Activated CD4-positive, alpha-beta T cell treated with anti-CD3 and anti-CD28 coated beads, Interleukin-2, amount 10 ng/mL, durations not matched to agents 24 days and 14 days (primary cell): ENCODE measurements at regions of chr12 and their contacts with region 1.

Region 1: GRCh38 chr12:7018350-7019042 is at the start of gene LPCAT3:
- DNase-seq: peak; percentile 100
- H3K4me3 Mint-ChIP-seq: peak within 1 kb of the TSS; percentile 90
- H3K27ac Mint-ChIP-seq: peak within 1 kb of the TSS; percentile 91
- H3K4me1 Mint-ChIP-seq: peaks cover 28% of the 10 kb centered on the region
- H3K27me3 Mint-ChIP-seq: no peaks in the 10 kb centered on the region
- total RNA-seq, gene LPCAT3: 29.2 and 29.5 TPM in 2 replicates

Region 2: GRCh38 chr12:6944381-6945186 is 73.9 kb before region 1 on chr12:
- intact Hi-C with region 1: loop called (anchors 1 kb)
- DNase-seq: peak; percentile 96
- H3K4me3 Mint-ChIP-seq: peak overlapping the region; percentile 93
- H3K27ac Mint-ChIP-seq: peak overlapping the region; percentile 98
- H3K4me1 Mint-ChIP-seq: peaks cover 62% of the 10 kb centered on the region
- H3K27me3 Mint-ChIP-seq: no peaks in the 10 kb centered on the region

Region 3: GRCh38 chr12:7092229-7092985 is 73.9 kb after region 1 on chr12 and contains the start of gene C1R:
- intact Hi-C with region 1: loop called (anchors 1 kb)
- DNase-seq: peak; percentile 90
- H3K4me3 Mint-ChIP-seq: peak within 1 kb of the TSS; percentile 83
- H3K27ac Mint-ChIP-seq: peak within 1 kb of the TSS; percentile 66
- H3K4me1 Mint-ChIP-seq: peaks cover 10% of the 10 kb centered on the region
- H3K27me3 Mint-ChIP-seq: no peaks in the 10 kb centered on the region
- total RNA-seq, gene C1R: 1.4 and 2.5 TPM in 2 replicates

Region 4: DNA sequence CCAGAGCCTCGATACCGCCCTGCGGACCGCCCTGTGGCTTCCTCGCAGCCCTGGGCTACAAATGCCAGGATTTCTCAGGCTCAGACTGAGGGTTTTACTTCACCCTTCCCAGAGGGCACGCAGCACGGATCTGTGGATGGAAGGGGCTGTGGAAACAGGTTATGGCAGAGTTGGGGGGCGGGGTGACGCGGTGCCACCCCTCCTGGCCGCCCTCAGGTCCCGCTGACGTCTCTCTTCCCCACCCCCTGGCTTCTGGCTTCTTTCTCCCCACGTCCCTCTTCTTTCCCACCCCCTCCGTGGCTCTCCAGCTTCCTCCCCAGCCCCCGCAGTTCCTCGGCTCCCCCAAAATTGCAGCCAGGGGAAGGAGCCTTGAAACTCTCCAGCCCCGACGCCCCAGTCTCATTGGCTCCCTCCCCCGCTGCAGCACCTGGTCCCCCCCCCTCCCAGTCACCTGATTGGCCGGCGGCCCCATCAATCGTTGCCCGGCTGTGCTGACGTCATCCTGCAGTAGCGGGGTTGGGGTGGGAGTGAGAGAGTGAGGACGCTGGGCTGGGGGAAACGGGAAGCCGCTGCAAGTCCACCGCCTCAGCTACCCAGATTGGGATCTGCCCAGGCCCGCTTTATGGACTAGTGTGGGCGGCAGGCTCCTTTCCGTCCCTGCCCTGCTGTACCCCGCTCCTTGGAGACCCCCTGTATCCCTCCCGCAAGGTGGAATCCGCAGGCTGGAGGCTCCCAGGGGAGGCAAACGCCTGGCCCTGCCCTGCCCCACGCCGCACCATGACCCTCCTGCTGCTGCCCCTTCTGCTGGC is 111.6 kb after region 1 on chr12 and contains the start of gene CLSTN3:
- intact Hi-C with region 1: loop called (anchors 1 kb)
- DNase-seq: peak; percentile 95
- H3K4me3 Mint-ChIP-seq: peak within 1 kb of the TSS; percentile 98
- H3K27ac Mint-ChIP-seq: peak within 1 kb of the TSS; percentile 89
- H3K4me1 Mint-ChIP-seq: peaks cover 44% of the 10 kb centered on the region
- H3K27me3 Mint-ChIP-seq: no peaks in the 10 kb centered on the region
- total RNA-seq, gene CLSTN3: 42.1 and 47.0 TPM in 2 replicates